ENCODE measurements at regions of chr19 and their contacts with region 1.

Region 1: GRCh38 chr19:15107061-15108010 is at the start of gene SYDE1:
- DNase-seq: peak; percentile 71
- ATAC-seq: peak; percentile 89
- H3K4me3 Mint-ChIP-seq: peak within 1 kb of the TSS; percentile 60
- H3K27ac Mint-ChIP-seq: peak within 1 kb of the TSS; percentile 51
- H3K4me1 Mint-ChIP-seq: peaks cover 13% of the 10 kb centered on the region
- H3K27me3 Mint-ChIP-seq: peaks cover 8% of the 10 kb centered on the region
- CTCF ChIP-seq: no peak
- total RNA-seq, gene SYDE1: 1.1 to 1.8 TPM

Region 2: DNA sequence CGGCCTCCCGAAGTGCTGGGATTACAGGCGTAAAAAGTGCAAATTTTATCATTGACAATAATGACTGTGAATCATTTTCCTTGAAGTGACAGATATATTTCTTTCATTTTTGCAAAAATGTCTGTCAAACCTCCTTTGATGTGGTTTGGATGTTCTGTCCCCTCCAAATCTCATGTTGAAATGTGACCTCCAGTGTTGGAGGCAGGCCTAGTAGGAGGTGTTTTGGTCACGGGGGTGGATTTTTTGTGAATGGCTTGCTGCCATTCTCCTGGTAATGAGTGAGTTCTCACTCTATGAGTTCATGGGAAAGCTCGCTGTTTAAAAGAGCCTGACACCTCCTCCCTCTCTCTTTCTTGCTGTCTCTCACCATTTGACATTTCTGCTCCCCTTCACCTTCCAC is 122.2 kb before region 1 on chr19:
- CTCF ChIA-PET with region 1: no interaction called
- POLR2A ChIA-PET with region 1: no interaction called
- intact Hi-C with region 1: no loop called
- DNase-seq: peak; percentile 15
- ATAC-seq: no peak
- H3K4me3 Mint-ChIP-seq: no peak overlapping the region
- H3K27ac Mint-ChIP-seq: no peak overlapping the region
- H3K4me1 Mint-ChIP-seq: no peaks in the 10 kb centered on the region
- H3K27me3 Mint-ChIP-seq: peaks cover 23% of the 10 kb centered on the region
- CTCF ChIP-seq: no peak

Region 3: DNA sequence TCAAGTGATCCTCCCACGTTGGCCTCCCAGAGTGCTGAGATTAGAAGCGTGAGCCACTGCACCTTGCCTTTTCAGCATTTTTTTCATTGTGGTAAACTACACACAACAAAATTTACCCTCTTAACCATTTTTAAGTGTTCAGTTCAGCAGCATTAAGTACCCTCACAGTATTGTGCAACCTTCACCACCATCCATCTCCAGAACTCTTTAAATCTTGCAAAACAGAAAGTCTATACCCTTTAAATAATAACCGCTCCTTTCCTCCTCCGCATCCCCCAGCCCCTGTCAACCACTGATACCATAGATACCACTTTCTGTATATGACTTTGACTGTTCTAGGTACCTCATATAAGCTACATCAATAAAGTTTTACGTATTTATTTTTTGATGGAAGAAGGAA is 78.8 kb before region 1 on chr19:
- CTCF ChIA-PET with region 1: no interaction called
- POLR2A ChIA-PET with region 1: no interaction called
- intact Hi-C with region 1: no loop called
- DNase-seq: no peak
- ATAC-seq: no peak
- H3K4me3 Mint-ChIP-seq: no peak overlapping the region
- H3K27ac Mint-ChIP-seq: no peak overlapping the region
- H3K4me1 Mint-ChIP-seq: no peaks in the 10 kb centered on the region
- H3K27me3 Mint-ChIP-seq: peaks cover 12% of the 10 kb centered on the region
- CTCF ChIP-seq: no peak

Region 4: GRCh38 chr19:15091901-15092753 is 15.2 kb before region 1 on chr19:
- CTCF ChIA-PET with region 1: interaction called, 51 read pairs
- POLR2A ChIA-PET with region 1: no interaction called
- intact Hi-C with region 1: no loop called
- DNase-seq: peak; percentile 60
- ATAC-seq: peak; percentile 60
- H3K4me3 Mint-ChIP-seq: no peak overlapping the region
- H3K27ac Mint-ChIP-seq: no peak overlapping the region
- H3K4me1 Mint-ChIP-seq: peaks cover 4% of the 10 kb centered on the region
- H3K27me3 Mint-ChIP-seq: peaks cover 8% of the 10 kb centered on the region
- CTCF ChIP-seq: peak; percentile 77